Motor neuron (in vitro differentiated cells): ENCODE measurements at regions of chr20 and their contacts with region 1.

Region 1: DNA sequence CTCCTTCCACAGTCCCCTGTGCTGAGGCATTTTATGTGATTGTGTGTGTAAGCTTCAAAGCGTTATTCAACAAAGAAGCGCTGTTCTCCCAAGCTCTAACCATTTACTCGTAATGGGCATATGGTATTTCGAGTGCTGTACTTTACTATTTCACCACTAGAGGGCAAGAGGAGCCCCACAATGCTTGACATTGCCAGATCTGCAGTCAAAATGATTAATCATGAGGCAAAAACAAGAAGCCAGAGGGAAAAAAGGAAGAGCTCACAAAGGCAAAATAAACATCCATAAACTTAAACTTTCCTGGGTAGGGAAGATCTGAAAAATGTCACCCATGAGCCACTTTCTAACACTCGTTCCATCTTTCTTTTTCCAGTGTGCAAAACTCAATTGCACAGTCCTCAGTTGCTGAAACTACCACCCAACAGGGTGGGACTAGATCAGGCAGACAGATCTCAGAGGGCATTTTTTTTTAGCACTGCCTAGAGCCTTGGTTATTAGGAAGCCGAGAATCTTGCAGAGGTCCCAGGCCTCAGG is 215.0 kb upstream of the PLCB4 start:
- ATAC-seq: peak; percentile 86 to 98 (median 94)
- H3K4me3 ChIP-seq: no peak overlapping the region
- H3K27ac ChIP-seq: no peak overlapping the region
- H3K4me1 ChIP-seq: peaks cover 0 to 6% of the 10 kb centered on the region in 2 donors

Region 2: GRCh38 chr20:8505476-8506200 is 348.2 kb before region 1 on chr20:
- in situ Hi-C with region 1: no loop called
- ATAC-seq: no peak
- H3K4me3 ChIP-seq: no peak overlapping the region
- H3K27ac ChIP-seq: no peak overlapping the region
- H3K4me1 ChIP-seq: no peaks in the 10 kb centered on the region

Region 3: GRCh38 chr20:8583566-8584043 is 270.3 kb before region 1 on chr20:
- in situ Hi-C with region 1: no loop called
- ATAC-seq: peak; percentile 70 to 94 (median 89)
- H3K4me3 ChIP-seq: no peak overlapping the region
- H3K27ac ChIP-seq: no peak overlapping the region
- H3K4me1 ChIP-seq: peaks cover 9 to 13% of the 10 kb centered on the region in 2 donors

Region 4: DNA sequence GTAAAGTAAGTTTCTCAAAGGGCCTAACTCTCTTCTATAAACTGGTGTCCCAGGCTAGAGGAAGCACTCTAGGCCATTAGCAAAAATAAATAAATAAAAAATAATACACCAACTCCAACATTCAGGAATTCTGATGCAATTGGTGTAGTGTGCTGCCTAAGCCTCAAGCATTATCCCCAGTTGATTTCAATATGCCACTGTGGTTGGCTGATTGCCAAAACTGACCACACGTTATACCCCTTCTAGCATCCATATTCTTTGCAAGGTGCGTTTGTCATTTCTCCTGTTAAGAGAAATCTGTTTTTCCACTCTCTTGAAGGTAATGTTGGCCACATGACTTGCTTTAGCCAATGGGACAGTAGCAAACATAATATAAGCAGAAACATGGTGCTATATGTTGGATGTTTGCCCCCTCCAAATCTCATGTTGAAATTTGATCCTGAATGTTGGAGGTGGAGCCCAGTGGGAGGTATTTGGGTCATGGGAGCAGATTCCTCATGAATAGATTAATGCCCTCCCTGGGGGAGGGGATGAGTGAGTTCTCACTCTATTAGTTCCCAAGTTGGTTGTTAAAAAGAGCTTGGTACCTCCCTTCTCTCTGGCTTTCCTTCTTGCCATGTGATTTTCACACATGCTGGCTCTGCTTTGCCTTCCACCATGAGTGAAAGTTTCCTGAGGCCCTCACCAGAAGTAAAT is 143.1 kb after region 1 on chr20:
- in situ Hi-C with region 1: no loop called
- ATAC-seq: no peak
- H3K4me3 ChIP-seq: no peak overlapping the region
- H3K27ac ChIP-seq: no peak overlapping the region
- H3K4me1 ChIP-seq: no peaks in the 10 kb centered on the region

Region 5: DNA sequence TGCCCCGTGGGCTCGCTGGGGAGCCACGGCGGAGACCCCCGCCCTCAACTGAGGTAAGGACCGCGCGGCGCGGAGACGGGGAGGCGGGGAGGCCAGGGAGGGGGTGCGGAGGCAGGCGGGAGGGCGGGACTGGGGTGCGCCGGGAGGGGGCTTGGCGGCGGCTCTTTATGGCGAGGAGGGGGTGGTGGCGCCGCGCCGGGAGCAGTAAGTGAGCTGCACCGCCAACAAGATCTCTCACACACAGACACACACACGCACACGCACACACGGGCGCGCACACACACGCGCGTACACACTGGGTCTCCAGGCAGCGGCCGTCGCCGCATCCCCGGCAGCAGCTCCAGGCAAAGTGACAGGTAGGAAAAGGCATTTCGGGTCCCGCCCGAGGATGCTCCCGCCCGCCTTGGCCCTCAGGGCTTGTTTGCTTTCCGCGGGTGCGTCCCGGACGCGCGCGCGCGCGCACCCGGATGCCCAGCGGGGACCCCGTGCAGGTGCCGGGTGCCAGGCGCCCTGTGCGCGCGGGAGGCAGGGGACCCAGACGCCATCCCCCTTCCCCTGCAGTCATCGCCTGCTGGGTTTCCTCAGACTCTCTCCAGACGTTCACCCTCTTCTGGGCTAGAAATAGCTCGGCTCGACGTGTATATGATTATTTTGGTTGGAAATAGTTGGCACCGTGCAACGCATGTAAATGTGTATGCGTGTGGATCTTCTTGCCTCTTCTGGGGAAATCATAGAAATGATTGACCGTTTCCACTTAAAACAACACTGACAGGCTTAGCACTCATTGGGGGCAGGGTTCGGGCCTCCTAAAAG is 215.2 kb after region 1 on chr20 and contains the start of gene PLCB4:
- in situ Hi-C with region 1: loop called in 2 of 9 experiments (anchors 25 kb)
- ATAC-seq: peak; percentile 45 to 69 (median 60)
- H3K4me3 ChIP-seq: peak within 1 kb of the TSS; percentile 57 to 98 (median 77)
- H3K27ac ChIP-seq: peak within 1 kb of the TSS; percentile 70 to 89
- H3K4me1 ChIP-seq: peaks cover 4 to 36% of the 10 kb centered on the region in 2 donors
- total RNA-seq, gene PLCB4: 4.4 to 27.2 (median 16.2) TPM

Region 6: GRCh38 chr20:9185511-9185910 is 331.6 kb after region 1 on chr20:
- in situ Hi-C with region 1: loop called in 1 of 9 experiments (anchors 25 kb)
- ATAC-seq: peak in 5 of 8 experiments; percentile 80 to 100 (median 92)
- H3K4me3 ChIP-seq: no peak overlapping the region
- H3K27ac ChIP-seq: no peak overlapping the region
- H3K4me1 ChIP-seq: no peaks in the 10 kb centered on the region